H1 (cell line): ENCODE measurements at regions of chr1 and their contacts with region 1.

Region 1: GRCh38 chr1:61056573-61057439 is 25.6 kb upstream of the NFIA start:
- DNase-seq: no peak
- H3K4me3 ChIP-seq: peak overlapping the region; percentile 38 to 65 (median 41); a peak in 7 of 8 replicates
- H3K27ac ChIP-seq: no peak overlapping the region
- H3K4me1 ChIP-seq: peaks cover 0 to 30% (median 14%) of the 10 kb centered on the region in 4 experiments; a peak in 6 of 7 replicates
- H3K27me3 ChIP-seq: peaks cover 47 to 62% (median 57%) of the 10 kb centered on the region in 4 experiments
- CTCF ChIP-seq: no peak
- EP300 ChIP-seq: no peak
- POLR2A ChIP-seq: no peak
- RAD21 ChIP-seq: no peak

Region 2: DNA sequence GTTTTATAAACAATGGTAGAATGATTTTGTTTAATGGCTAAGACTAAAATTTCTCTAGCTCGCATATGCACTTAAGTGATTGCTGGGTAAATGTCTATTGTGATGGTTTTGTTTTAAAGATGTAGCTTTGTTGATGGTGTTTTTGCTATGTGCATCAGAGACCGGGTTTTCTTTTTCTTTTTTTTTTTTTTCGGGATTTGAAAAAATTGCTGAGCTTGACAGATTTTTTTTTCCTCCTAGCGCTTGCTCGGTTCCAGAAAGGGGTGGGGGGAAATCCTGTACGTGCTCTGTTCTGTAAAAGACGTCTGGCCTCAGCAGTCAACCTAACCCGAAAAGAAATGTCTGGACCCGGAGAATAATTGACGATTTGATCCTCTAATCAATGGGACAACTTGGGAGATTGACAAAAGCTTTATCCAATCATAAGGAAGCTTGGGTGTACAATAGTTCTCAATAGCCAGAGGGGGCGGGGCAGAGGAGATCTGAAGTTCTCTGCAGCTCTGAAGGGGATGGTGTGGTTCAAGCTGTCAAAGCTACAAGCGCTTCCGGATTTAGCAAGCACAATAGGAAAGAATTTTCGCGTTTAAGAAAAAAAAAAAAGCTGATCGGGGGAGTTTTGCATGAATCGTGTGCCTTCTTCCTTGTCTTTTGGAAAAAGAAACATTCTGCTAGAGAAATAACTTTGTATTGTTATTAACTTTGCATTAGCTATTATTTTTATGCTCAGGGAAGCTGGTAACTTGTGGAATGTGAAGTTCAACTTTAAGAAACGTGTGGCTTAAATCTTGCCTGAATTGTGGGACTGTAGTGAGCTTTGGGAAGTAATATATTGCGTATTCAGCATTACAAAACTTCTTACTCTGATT is 21.1 kb after region 1 on chr1:
- CTCF ChIA-PET with region 1: interaction called, 65 read pairs
- POLR2A ChIA-PET with region 1: interaction called, 12 read pairs
- DNase-seq: peak in 1 of 2 experiments; percentile 74
- H3K4me3 ChIP-seq: peak overlapping the region; percentile 38 to 77 (median 74)
- H3K27ac ChIP-seq: no peak overlapping the region
- H3K4me1 ChIP-seq: peaks cover 5 to 23% (median 11%) of the 10 kb centered on the region in 4 experiments; a peak in 5 of 7 replicates
- H3K27me3 ChIP-seq: peaks cover 15 to 45% (median 34%) of the 10 kb centered on the region in 4 experiments
- CTCF ChIP-seq: no peak
- EP300 ChIP-seq: no peak
- POLR2A ChIP-seq: no peak
- RAD21 ChIP-seq: no peak

Region 3: DNA sequence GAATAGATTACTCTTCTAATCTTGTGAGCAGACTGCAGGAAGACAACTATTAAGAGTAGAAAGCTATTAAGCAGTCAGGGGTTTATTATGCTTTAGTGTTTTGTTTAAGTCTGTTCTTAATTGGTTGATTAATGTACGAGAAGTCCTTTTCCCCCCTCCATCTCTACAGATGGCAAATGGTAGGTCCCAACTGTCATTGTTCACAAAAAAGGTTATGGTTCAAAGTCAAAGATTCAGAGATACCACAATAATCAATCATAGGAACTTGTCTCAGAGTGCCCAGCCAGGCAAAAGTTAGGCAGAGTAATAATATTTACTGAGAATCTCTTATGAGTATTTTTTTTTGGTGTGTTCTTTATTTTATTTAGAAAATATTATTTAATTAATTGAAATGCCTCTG is 52.4 kb after region 1 on chr1:
- CTCF ChIA-PET with region 1: no interaction called
- POLR2A ChIA-PET with region 1: no interaction called
- DNase-seq: no peak
- H3K4me3 ChIP-seq: no peak overlapping the region
- H3K27ac ChIP-seq: no peak overlapping the region
- H3K4me1 ChIP-seq: peaks cover 0 to 7% (median 0%) of the 10 kb centered on the region in 4 experiments; a peak in 1 of 7 replicates
- H3K27me3 ChIP-seq: no peaks in the 10 kb centered on the region
- CTCF ChIP-seq: no peak
- EP300 ChIP-seq: no peak
- POLR2A ChIP-seq: no peak
- RAD21 ChIP-seq: no peak